ENCODE measurements at regions of chr18 and their contacts with region 1.

Region 1: GRCh38 chr18:50527636-50528307 is 32.1 kb upstream of the MAPK4 start:
- DNase-seq: no peak
- H3K4me3 ChIP-seq: no peak overlapping the region
- H3K27ac ChIP-seq: no peak overlapping the region
- H3K4me1 ChIP-seq: no peaks in the 10 kb centered on the region
- H3K27me3 ChIP-seq: peaks cover 2% of the 10 kb centered on the region
- CTCF ChIP-seq: no peak

Region 2: GRCh38 chr18:50397023-50397422 is 130.7 kb before region 1 on chr18:
- CTCF ChIA-PET with region 1: no interaction called
- dilution Hi-C with region 1: no loop called
- in situ Hi-C with region 1: no loop called
- intact Hi-C with region 1: no loop called
- DNase-seq: no peak
- H3K4me3 ChIP-seq: no peak overlapping the region
- H3K27ac ChIP-seq: no peak overlapping the region
- H3K4me1 ChIP-seq: peaks cover 3% of the 10 kb centered on the region
- H3K27me3 ChIP-seq: no peaks in the 10 kb centered on the region
- CTCF ChIP-seq: no peak

Region 3: GRCh38 chr18:50700245-50701165 is 172.7 kb after region 1 on chr18:
- CTCF ChIA-PET with region 1: no interaction called
- dilution Hi-C with region 1: loop called (anchors 5 kb)
- in situ Hi-C with region 1: no loop called
- intact Hi-C with region 1: no loop called
- DNase-seq: no peak
- H3K4me3 ChIP-seq: no peak overlapping the region
- H3K27ac ChIP-seq: no peak overlapping the region
- H3K4me1 ChIP-seq: no peaks in the 10 kb centered on the region
- H3K27me3 ChIP-seq: no peaks in the 10 kb centered on the region
- CTCF ChIP-seq: no peak

Measured in mammary epithelial cell (primary cell).